A673 (cell line): ENCODE measurements at regions of chr2 and their contacts with region 1.

Region 1: DNA sequence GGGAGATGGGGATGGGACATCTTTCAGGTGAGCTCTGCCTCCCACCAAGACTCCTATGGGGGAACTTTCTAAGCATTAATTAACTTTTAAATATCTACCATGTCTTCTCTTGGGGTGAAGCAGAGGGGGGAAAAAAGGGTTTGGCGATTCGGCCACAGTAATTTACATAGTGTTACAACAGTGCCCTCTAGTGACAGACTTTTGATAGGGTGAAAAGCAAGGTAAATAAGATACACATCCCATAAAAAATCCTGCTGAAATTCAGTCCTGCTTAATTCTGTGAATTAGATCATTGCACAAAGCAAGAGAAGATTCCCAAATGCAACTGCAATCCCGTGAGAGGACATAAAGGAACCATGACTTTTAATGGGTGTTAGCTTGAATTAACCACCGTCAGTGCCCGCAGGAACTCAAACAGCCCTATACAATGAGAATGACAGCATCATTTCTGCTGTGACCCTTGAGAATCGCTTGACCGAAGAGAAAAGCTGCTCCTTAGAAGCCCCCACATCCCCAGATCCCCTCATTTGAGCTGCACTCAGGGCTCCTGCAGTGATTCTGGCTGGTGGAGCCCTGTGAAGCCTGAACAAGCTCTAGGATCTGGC is 32.8 kb downstream of the FAM124B start:
- DNase-seq: peak; percentile 81
- H3K4me3 ChIP-seq: no peak overlapping the region
- H3K27ac ChIP-seq: no peak overlapping the region
- H3K4me1 ChIP-seq: peaks cover 15% of the 10 kb centered on the region
- H3K27me3 ChIP-seq: no peaks in the 10 kb centered on the region
- CTCF ChIP-seq: peak; percentile 84

Region 2: DNA sequence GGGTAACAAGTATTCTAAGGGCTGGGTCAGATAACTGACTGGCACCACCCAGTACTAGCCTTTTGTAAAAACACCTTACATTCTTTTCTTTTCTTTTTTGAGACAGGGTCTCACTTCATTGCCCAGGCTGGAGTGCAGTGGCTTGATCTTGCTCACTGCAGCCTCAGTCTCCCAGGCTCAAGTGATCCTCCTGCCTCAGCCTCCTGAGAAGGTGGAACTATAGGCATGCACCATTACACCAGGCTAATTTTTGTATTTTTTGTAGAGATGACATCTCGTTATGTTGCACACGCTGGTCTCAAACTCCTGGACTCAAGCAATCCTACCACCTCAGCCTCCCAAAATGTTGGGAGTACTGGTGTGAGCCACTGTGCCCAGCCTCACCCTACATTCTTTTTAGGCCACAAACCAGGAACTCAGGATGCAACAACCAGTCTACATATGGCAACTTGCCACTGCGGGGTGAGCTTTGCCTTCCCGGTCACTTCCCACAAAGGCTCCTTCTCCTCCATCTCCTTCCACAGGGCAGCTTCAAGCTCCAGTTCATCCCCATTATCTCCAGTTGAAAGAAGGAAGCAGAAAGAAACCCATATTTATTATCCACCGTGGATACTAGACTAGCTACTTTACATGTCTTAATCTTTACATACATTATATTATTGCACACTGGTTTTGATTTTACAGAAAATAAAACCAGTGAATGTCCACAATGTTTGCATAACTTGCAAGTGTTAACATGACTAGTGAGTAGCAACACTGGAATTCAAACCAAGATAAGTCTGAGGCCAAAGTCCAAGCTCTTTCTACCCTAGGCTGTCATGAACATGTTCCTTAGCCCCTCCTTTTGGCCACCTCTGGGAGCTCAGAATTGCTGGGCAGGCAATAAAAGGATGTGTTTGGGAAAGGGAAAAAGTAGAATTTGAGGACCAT is 508.1 kb before region 1 on chr2:
- CTCF ChIA-PET with region 1: no interaction called
- POLR2A ChIA-PET with region 1: no interaction called
- intact Hi-C with region 1: loop called (anchors 5 kb)
- DNase-seq: no peak
- H3K4me3 ChIP-seq: no peak overlapping the region
- H3K27ac ChIP-seq: no peak overlapping the region
- H3K4me1 ChIP-seq: peaks cover 19% of the 10 kb centered on the region
- H3K27me3 ChIP-seq: no peaks in the 10 kb centered on the region
- CTCF ChIP-seq: no peak

Region 3: DNA sequence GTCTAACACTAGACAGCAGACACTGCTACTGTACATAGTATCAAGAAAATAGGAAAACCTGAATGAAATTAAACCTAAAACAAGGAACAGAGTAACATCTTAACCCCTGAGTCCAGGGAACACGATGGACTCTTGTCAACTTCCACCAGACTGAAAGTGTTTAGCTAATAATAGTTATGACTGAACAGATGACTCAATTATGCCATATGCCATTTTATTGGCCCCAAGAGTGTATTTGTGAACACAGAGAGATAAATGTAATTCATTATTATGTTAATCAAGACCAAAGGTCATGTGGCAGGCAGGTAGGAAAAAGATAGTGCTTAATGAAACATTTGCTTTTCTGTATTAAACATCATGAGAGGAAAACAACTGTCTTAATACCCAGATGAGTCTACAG is 1088.4 kb after region 1 on chr2:
- CTCF ChIA-PET with region 1: no interaction called
- POLR2A ChIA-PET with region 1: no interaction called
- intact Hi-C with region 1: no loop called
- DNase-seq: no peak
- H3K4me3 ChIP-seq: no peak overlapping the region
- H3K27ac ChIP-seq: no peak overlapping the region
- H3K4me1 ChIP-seq: no peaks in the 10 kb centered on the region
- H3K27me3 ChIP-seq: no peaks in the 10 kb centered on the region
- CTCF ChIP-seq: no peak